ENCODE measurements at regions of chr1 and their contacts with region 1.

Region 1: GRCh38 chr1:183633633-183634343 is 1.8 kb downstream of the ARPC5 start:
- DNase-seq: peak in 8 of 35 experiments; percentile 1 to 75 (median 18)
- ATAC-seq: peak; percentile 18 to 60 (median 36)
- H3K4me3 ChIP-seq: peak overlapping the region; percentile 47 to 97
- H3K4me3 Mint-ChIP-seq: peak overlapping the region; percentile 99 to 100 (median 100)
- H3K27ac ChIP-seq: peak overlapping the region; percentile 19
- H3K27ac Mint-ChIP-seq: peak overlapping the region; percentile 87 to 89
- H3K4me1 ChIP-seq: peaks cover 11 to 44% of the 10 kb centered on the region in 2 experiments
- H3K4me1 Mint-ChIP-seq: peaks cover 60 to 74% (median 71%) of the 10 kb centered on the region in 3 donors
- H3K27me3 ChIP-seq: no peaks in the 10 kb centered on the region
- H3K27me3 Mint-ChIP-seq: no peaks in the 10 kb centered on the region

Region 2: DNA sequence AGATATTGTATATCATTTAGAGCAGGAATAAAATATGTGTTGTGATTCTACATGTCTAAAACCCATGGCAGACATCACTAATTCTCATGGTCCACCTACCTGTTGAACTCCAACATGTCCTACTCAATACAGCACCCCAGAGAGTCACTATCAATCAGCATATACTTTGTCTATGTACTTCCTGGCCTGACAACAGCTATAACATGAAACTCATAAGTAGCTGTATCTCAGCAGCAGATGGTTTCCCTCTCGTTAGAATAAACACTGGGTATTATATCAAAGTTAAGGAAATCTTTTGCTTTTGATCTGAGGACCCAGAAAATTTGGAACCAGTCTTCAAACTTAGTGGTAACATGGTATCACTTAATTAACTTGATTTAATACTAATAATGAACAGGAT is 14.0 kb before region 1 on chr1:
- CTCF ChIA-PET with region 1: no interaction called
- POLR2A ChIA-PET with region 1: no interaction called
- DNase-seq: no peak
- ATAC-seq: peak in 3 of 4 experiments; percentile 28 to 43 (median 38)
- H3K4me3 ChIP-seq: no peak overlapping the region
- H3K4me3 Mint-ChIP-seq: no peak overlapping the region
- H3K27ac ChIP-seq: no peak overlapping the region
- H3K27ac Mint-ChIP-seq: peak overlapping the region in 1 of 2 donors; percentile 68
- H3K4me1 ChIP-seq: no peaks in the 10 kb centered on the region
- H3K4me1 Mint-ChIP-seq: peaks cover 0 to 11% (median 10%) of the 10 kb centered on the region in 3 donors
- H3K27me3 ChIP-seq: no peaks in the 10 kb centered on the region
- H3K27me3 Mint-ChIP-seq: peaks cover 0 to 2% of the 10 kb centered on the region in 2 donors

Region 3: GRCh38 chr1:183655562-183656075 is 21.8 kb after region 1 on chr1:
- CTCF ChIA-PET with region 1: interaction called, 3 to 14 read pairs
- POLR2A ChIA-PET with region 1: interaction called in 1 of 2 experiments, 3 read pairs
- DNase-seq: peak; percentile 16 to 87 (median 61)
- ATAC-seq: peak; percentile 62 to 78 (median 74)
- H3K4me3 ChIP-seq: no peak overlapping the region
- H3K4me3 Mint-ChIP-seq: no peak overlapping the region
- H3K27ac ChIP-seq: no peak overlapping the region
- H3K27ac Mint-ChIP-seq: peak overlapping the region in 1 of 2 donors; percentile 45
- H3K4me1 ChIP-seq: peaks cover 13 to 25% of the 10 kb centered on the region in 2 experiments
- H3K4me1 Mint-ChIP-seq: peaks cover 35 to 38% (median 36%) of the 10 kb centered on the region in 3 donors
- H3K27me3 ChIP-seq: no peaks in the 10 kb centered on the region
- H3K27me3 Mint-ChIP-seq: peaks cover 0 to under 1% of the 10 kb centered on the region in 2 donors

Region 4: GRCh38 chr1:183685112-183685713 is 51.4 kb after region 1 on chr1:
- CTCF ChIA-PET with region 1: interaction called, 5 to 16 read pairs
- POLR2A ChIA-PET with region 1: no interaction called
- DNase-seq: peak in 10 of 35 experiments; percentile 4 to 72 (median 16)
- ATAC-seq: peak; percentile 56 to 63 (median 58)
- H3K4me3 ChIP-seq: no peak overlapping the region
- H3K4me3 Mint-ChIP-seq: no peak overlapping the region
- H3K27ac ChIP-seq: no peak overlapping the region
- H3K27ac Mint-ChIP-seq: no peak overlapping the region
- H3K4me1 ChIP-seq: no peaks in the 10 kb centered on the region
- H3K4me1 Mint-ChIP-seq: no peaks in the 10 kb centered on the region
- H3K27me3 ChIP-seq: peaks cover 0 to 8% of the 10 kb centered on the region in 2 experiments
- H3K27me3 Mint-ChIP-seq: peaks cover 0 to 10% of the 10 kb centered on the region in 2 donors

Region 5: GRCh38 chr1:183742355-183742754 is 108.6 kb after region 1 on chr1:
- CTCF ChIA-PET with region 1: no interaction called
- POLR2A ChIA-PET with region 1: no interaction called
- DNase-seq: no peak
- ATAC-seq: no peak
- H3K4me3 ChIP-seq: no peak overlapping the region
- H3K4me3 Mint-ChIP-seq: no peak overlapping the region
- H3K27ac ChIP-seq: no peak overlapping the region
- H3K27ac Mint-ChIP-seq: no peak overlapping the region
- H3K4me1 ChIP-seq: no peaks in the 10 kb centered on the region
- H3K4me1 Mint-ChIP-seq: peaks cover 0 to 2% (median 0%) of the 10 kb centered on the region in 3 donors
- H3K27me3 ChIP-seq: no peaks in the 10 kb centered on the region
- H3K27me3 Mint-ChIP-seq: no peaks in the 10 kb centered on the region

Region 6: DNA sequence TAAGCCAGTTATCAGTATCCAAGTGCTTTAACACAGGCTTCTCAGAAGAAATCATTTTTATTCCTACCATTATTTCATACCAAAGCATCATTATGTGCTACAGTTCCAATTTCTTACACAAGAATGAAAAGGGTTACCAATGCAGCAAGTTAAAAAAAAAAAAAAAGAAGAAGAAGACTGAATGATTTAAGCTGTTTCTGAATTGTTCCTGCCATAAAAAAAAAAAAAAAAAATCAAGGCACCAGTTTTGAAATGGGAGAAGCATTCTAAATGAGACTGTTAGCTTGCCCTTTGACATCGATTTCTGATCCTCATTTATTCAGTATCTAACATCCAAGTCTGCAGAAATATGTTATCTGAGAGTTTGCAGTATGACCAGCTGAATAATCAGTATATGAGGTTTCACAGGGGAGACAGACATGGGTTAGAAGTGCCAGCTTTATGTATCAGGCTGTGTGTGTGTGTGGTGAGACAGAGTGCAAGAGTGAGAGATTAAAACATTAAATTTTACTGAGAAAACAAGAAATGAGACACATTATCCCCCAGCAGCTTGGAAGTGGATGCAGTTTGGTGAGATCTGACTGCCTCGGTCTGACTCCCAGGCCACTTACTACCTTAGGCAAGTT is 298.0 kb after region 1 on chr1:
- CTCF ChIA-PET with region 1: interaction called in 1 of 2 experiments, 12 read pairs
- POLR2A ChIA-PET with region 1: no interaction called
- DNase-seq: no peak
- ATAC-seq: no peak
- H3K4me3 ChIP-seq: no peak overlapping the region
- H3K4me3 Mint-ChIP-seq: no peak overlapping the region
- H3K27ac ChIP-seq: no peak overlapping the region
- H3K27ac Mint-ChIP-seq: peak overlapping the region in 1 of 2 donors; percentile 5
- H3K4me1 ChIP-seq: no peaks in the 10 kb centered on the region
- H3K4me1 Mint-ChIP-seq: no peaks in the 10 kb centered on the region
- H3K27me3 ChIP-seq: no peaks in the 10 kb centered on the region
- H3K27me3 Mint-ChIP-seq: no peaks in the 10 kb centered on the region

Region 7: GRCh38 chr1:184754476-184755225 is 1120.9 kb after region 1 on chr1 and contains the start of gene EDEM3:
- CTCF ChIA-PET with region 1: no interaction called
- POLR2A ChIA-PET with region 1: interaction called, 6 to 10 read pairs
- DNase-seq: peak; percentile 89 to 100 (median 98)
- ATAC-seq: peak; percentile 92 to 95 (median 93)
- H3K4me3 ChIP-seq: peak within 1 kb of the TSS; percentile 84 to 95
- H3K4me3 Mint-ChIP-seq: peak within 1 kb of the TSS; percentile 83 to 90 (median 88)
- H3K27ac ChIP-seq: peak within 1 kb of the TSS; percentile 73
- H3K27ac Mint-ChIP-seq: peak within 1 kb of the TSS; percentile 75 to 88
- H3K4me1 ChIP-seq: peaks cover 5 to 18% of the 10 kb centered on the region in 2 experiments
- H3K4me1 Mint-ChIP-seq: peaks cover 41 to 54% (median 50%) of the 10 kb centered on the region in 3 donors
- H3K27me3 ChIP-seq: no peaks in the 10 kb centered on the region
- H3K27me3 Mint-ChIP-seq: no peaks in the 10 kb centered on the region
- total RNA-seq, gene EDEM3: 21.0 to 44.1 (median 39.1) TPM

Measured in T-cell (primary cell).